Activated CD8-positive, alpha-beta T cell treated with anti-CD3 and anti-CD28 coated beads for 36 hours (primary cell): ENCODE measurements at regions of chr11 and their contacts with region 1.

Region 1: DNA sequence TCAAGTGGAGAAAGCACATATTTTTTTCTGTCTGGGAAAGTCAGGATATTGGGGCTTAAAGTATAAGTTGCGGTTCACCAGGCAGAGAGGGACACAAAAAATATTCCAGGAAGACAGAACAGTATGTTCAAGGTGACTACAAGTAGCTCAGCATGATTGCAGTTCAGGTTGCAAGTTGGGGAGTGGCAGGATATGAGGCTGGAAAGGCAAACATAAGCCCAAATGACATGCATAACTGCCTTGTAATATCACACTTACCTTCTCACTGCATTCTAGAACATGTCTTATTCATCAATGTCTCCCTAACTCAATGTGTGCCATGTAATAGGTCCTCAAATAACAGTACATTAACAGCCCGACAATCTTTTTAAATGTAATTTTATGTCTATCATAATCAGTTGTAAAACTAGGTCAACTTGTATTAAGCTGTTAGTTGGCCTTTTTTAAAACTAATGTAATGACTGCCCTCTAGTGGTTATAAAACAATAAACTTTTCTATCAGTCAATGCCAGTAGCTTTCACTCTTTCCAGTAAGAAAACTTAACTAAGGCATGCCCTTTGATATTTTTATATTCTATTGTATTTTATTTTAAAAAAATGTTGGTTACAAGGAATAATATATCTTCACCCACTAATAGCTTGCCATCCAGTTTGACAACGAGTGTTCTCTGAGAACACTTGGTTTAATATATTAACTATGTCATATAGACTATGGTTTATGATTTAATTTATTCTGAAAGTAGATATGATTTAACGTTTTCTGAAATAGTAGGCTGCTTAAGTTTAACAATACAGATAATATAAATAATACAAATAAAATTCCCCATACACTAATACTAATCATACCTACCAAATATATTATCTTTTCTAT is 39.4 kb upstream of the CFAP300 start:
- DNase-seq: no peak
- ATAC-seq: peak; percentile 47
- H3K4me3 Mint-ChIP-seq: no peak overlapping the region
- H3K27ac Mint-ChIP-seq: no peak overlapping the region
- H3K4me1 Mint-ChIP-seq: peaks cover 5% of the 10 kb centered on the region
- H3K27me3 Mint-ChIP-seq: peaks cover 8% of the 10 kb centered on the region
- CTCF ChIP-seq: peak; percentile 68

Region 2: GRCh38 chr11:101860696-101861427 is 146.9 kb before region 1 on chr11:
- CTCF ChIA-PET with region 1: interaction called, 123 read pairs
- POLR2A ChIA-PET with region 1: no interaction called
- intact Hi-C with region 1: loop called (anchors 1 kb)
- DNase-seq: peak; percentile 39
- ATAC-seq: peak; percentile 72
- H3K4me3 Mint-ChIP-seq: no peak overlapping the region
- H3K27ac Mint-ChIP-seq: no peak overlapping the region
- H3K4me1 Mint-ChIP-seq: no peaks in the 10 kb centered on the region
- H3K27me3 Mint-ChIP-seq: peaks cover 13% of the 10 kb centered on the region
- CTCF ChIP-seq: peak; percentile 77

Region 3: DNA sequence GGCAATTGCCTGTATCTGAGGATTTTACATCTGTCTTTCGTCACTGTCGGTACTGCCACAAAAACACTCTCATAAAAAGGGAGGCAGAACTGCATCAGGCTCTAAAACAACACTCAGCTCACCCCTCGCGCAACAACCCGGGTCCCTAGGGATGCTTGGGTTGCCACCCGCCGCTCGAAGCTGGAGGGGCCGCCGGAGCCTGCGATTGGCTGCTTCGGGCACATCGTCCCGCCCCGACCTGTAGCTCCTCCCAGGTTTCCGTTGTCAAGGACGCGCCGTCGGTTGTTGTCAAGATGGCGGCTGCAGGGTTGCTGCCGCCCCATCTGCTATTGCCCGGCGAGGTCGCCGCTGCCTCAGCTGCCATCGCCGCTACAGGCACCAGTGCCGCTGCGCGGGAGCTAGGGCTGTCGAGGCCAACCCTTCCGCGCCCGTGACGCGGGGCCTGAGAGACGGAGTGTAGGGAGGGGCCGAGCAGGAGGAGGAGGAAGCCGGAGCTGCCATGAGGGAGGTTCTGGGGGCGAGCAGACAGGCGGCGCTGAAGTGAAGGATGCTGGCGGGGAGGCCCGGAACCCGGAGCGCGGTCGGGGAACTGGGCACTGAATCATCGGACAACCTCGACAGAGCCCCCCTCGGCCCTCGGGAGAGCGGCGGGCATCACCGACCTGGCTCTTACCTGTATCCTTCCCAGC is 92.9 kb before region 1 on chr11 and contains the start of gene CEP126:
- CTCF ChIA-PET with region 1: interaction called, 10 read pairs
- POLR2A ChIA-PET with region 1: no interaction called
- intact Hi-C with region 1: loop called (anchors 10 kb)
- DNase-seq: peak; percentile 96
- ATAC-seq: peak; percentile 97
- H3K4me3 Mint-ChIP-seq: peak within 1 kb of the TSS; percentile 89
- H3K27ac Mint-ChIP-seq: peak within 1 kb of the TSS; percentile 87
- H3K4me1 Mint-ChIP-seq: peaks cover 18% of the 10 kb centered on the region
- H3K27me3 Mint-ChIP-seq: peaks cover 4% of the 10 kb centered on the region
- CTCF ChIP-seq: peak; percentile 17
- total RNA-seq, gene CEP126: 1.1 to 1.6 TPM

Region 4: DNA sequence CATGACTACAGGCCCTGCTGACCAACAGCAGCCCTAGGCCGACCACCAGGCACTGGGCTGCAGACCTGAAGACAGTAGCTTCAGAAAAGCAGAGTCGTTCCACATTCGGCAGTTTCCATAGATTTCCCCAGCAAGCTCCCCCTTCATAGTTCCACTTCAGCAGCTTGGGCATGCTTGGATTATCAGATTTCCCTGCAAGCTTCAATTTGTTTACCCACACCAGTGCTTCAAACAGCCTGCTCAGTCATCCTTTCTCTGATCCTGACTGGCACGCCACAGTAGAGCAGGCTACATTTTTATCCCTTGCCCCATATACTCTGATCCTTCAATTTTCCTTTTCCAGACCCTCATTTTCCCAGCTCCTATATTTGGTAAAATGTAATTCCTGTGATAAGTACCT is 11.7 kb before region 1 on chr11:
- CTCF ChIA-PET with region 1: interaction called, 26 read pairs
- POLR2A ChIA-PET with region 1: no interaction called
- intact Hi-C with region 1: no loop called
- DNase-seq: no peak
- ATAC-seq: no peak
- H3K4me3 Mint-ChIP-seq: no peak overlapping the region
- H3K27ac Mint-ChIP-seq: no peak overlapping the region
- H3K4me1 Mint-ChIP-seq: no peaks in the 10 kb centered on the region
- H3K27me3 Mint-ChIP-seq: no peaks in the 10 kb centered on the region
- CTCF ChIP-seq: no peak